ENCODE measurements at regions of chr18 and their contacts with region 1.

Region 1: GRCh38 chr18:41378598-41378997 is 576.4 kb upstream of the PIK3C3 start:
- DNase-seq: peak; percentile 39
- H3K4me3 ChIP-seq: no peak overlapping the region
- H3K27ac ChIP-seq: no peak overlapping the region
- H3K4me1 ChIP-seq: no peaks in the 10 kb centered on the region
- H3K27me3 ChIP-seq: no peaks in the 10 kb centered on the region
- CTCF ChIP-seq: peak; percentile 45 to 61

Region 2: DNA sequence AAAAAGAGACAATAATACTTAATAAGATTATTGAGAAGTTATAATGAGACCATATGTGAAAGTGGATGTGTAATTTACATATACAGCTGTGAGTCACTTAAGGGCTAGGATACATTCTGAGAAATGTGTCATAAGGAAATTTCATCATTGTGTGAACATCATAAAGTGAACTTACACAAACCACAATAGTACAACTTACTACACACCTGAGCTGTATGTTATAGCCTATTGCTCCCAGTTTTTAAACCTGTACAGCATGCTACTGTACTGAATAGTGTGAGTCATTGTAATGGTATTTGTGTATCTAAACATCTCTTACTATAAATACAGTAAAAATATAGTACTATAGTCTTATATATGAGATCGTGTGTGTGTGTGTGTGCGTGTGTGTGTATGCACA is 843.9 kb before region 1 on chr18:
- CTCF ChIA-PET with region 1: no interaction called
- dilution Hi-C with region 1: no loop called
- in situ Hi-C with region 1: no loop called
- intact Hi-C with region 1: loop called (anchors 10 kb)
- DNase-seq: peak; percentile 87
- H3K4me3 ChIP-seq: no peak overlapping the region
- H3K27ac ChIP-seq: no peak overlapping the region
- H3K4me1 ChIP-seq: peaks cover 4% of the 10 kb centered on the region
- H3K27me3 ChIP-seq: no peaks in the 10 kb centered on the region
- CTCF ChIP-seq: no peak

Region 3: GRCh38 chr18:40939656-40940515 is 438.7 kb before region 1 on chr18:
- CTCF ChIA-PET with region 1: no interaction called
- dilution Hi-C with region 1: no loop called
- in situ Hi-C with region 1: no loop called
- intact Hi-C with region 1: loop called (anchors 10 kb)
- DNase-seq: no peak
- H3K4me3 ChIP-seq: no peak overlapping the region
- H3K27ac ChIP-seq: no peak overlapping the region
- H3K4me1 ChIP-seq: no peaks in the 10 kb centered on the region
- H3K27me3 ChIP-seq: no peaks in the 10 kb centered on the region
- CTCF ChIP-seq: no peak

Region 4: GRCh38 chr18:41131050-41131449 is 247.5 kb before region 1 on chr18:
- CTCF ChIA-PET with region 1: no interaction called
- dilution Hi-C with region 1: no loop called
- in situ Hi-C with region 1: no loop called
- intact Hi-C with region 1: no loop called
- DNase-seq: no peak
- H3K4me3 ChIP-seq: no peak overlapping the region
- H3K27ac ChIP-seq: no peak overlapping the region
- H3K4me1 ChIP-seq: peaks cover 26% of the 10 kb centered on the region
- H3K27me3 ChIP-seq: no peaks in the 10 kb centered on the region
- CTCF ChIP-seq: no peak

Region 5: DNA sequence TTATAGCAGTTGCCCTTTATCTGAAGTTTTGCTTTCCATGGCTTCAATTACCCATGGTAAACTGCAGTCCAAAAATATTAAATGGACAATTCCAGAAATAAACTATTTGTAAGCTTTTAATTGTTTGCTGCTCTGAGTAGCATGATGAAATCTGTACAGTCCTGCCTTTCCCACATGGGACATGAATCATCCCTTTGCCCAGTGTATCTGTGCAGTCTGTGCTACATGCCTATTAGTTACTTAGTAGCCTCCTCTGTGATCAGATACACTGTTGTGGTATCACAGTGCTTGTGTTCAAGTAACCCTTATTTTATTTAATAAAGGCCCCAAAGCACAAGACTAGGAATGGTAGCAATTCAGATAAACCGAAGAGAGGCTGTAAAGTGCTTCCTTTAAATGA is 234.2 kb before region 1 on chr18:
- CTCF ChIA-PET with region 1: no interaction called
- dilution Hi-C with region 1: no loop called
- in situ Hi-C with region 1: no loop called
- intact Hi-C with region 1: loop called (anchors 10 kb)
- DNase-seq: peak; percentile 75
- H3K4me3 ChIP-seq: no peak overlapping the region
- H3K27ac ChIP-seq: peak overlapping the region; percentile 79
- H3K4me1 ChIP-seq: peaks cover 26% of the 10 kb centered on the region
- H3K27me3 ChIP-seq: no peaks in the 10 kb centered on the region
- CTCF ChIP-seq: no peak

Region 6: GRCh38 chr18:41311571-41312547 is 66.7 kb before region 1 on chr18:
- CTCF ChIA-PET with region 1: no interaction called
- dilution Hi-C with region 1: no loop called
- in situ Hi-C with region 1: no loop called
- intact Hi-C with region 1: no loop called
- DNase-seq: no peak
- H3K4me3 ChIP-seq: no peak overlapping the region
- H3K27ac ChIP-seq: no peak overlapping the region
- H3K4me1 ChIP-seq: no peaks in the 10 kb centered on the region
- H3K27me3 ChIP-seq: no peaks in the 10 kb centered on the region
- CTCF ChIP-seq: no peak

Measured in mammary epithelial cell (primary cell).